ENCODE measurements at regions of chr3 and their contacts with region 1.

Region 1: GRCh38 chr3:129249276-129250065 is at the start of gene COPG1:
- DNase-seq: peak; percentile 89
- ATAC-seq: peak; percentile 86
- H3K4me3 Mint-ChIP-seq: peak within 1 kb of the TSS; percentile 95
- H3K27ac Mint-ChIP-seq: peak within 1 kb of the TSS; percentile 96
- H3K4me1 Mint-ChIP-seq: peaks cover 38% of the 10 kb centered on the region
- H3K27me3 Mint-ChIP-seq: no peaks in the 10 kb centered on the region
- CTCF ChIP-seq: no peak
- total RNA-seq, gene COPG1: 114 to 118 TPM

Region 2: GRCh38 chr3:129045675-129046036 is 203.8 kb before region 1 on chr3:
- CTCF ChIA-PET with region 1: interaction called, 53 read pairs
- POLR2A ChIA-PET with region 1: no interaction called
- intact Hi-C with region 1: no loop called
- DNase-seq: peak; percentile 56
- ATAC-seq: peak; percentile 90
- H3K4me3 Mint-ChIP-seq: peak overlapping the region; percentile 34
- H3K27ac Mint-ChIP-seq: no peak overlapping the region
- H3K4me1 Mint-ChIP-seq: peaks cover 2% of the 10 kb centered on the region
- H3K27me3 Mint-ChIP-seq: peaks cover 6% of the 10 kb centered on the region
- CTCF ChIP-seq: no peak

Region 3: DNA sequence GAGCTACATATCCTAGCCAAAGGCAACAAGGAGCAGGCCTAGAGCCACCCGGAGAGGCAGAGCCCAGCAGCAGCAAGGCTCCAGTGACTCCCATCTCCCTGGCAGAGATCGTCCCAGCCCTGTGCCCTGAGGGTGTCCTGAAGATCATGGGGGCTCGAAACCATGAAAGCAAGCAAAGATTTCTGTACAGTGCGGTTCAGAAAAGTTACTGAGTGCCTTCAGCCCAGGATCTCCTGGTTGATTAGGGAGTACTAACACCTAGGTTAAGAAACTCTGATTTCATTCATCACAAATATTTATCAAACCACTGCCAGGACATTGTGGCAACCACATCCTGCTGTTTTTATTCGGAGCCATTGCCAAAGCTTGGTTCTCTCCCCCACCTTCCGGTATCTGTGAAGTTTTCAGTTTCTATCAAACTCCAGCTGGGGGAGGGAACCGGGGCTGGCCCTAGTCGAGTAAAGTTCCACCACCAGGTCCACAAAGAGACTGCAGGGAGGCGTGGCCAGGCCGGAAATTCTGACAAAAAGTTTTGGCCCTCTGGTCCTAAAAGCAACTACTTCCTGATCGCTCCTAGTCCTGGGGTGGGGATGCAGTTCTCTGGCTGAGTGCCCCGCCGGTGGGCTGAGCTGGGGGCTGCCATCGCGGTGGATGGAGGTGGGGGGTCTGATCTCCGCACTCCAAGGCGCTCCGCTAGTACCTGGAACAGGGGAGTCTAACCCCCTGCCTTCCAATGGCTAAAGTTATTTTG is 129.0 kb before region 1 on chr3:
- CTCF ChIA-PET with region 1: interaction called, 7 read pairs
- POLR2A ChIA-PET with region 1: interaction called, 6 read pairs
- intact Hi-C with region 1: loop called (anchors 5 kb)
- DNase-seq: peak; percentile 98
- ATAC-seq: peak; percentile 63
- H3K4me3 Mint-ChIP-seq: peak overlapping the region; percentile 88
- H3K27ac Mint-ChIP-seq: peak overlapping the region; percentile 90
- H3K4me1 Mint-ChIP-seq: peaks cover 45% of the 10 kb centered on the region
- H3K27me3 Mint-ChIP-seq: no peaks in the 10 kb centered on the region
- CTCF ChIP-seq: no peak

Region 4: DNA sequence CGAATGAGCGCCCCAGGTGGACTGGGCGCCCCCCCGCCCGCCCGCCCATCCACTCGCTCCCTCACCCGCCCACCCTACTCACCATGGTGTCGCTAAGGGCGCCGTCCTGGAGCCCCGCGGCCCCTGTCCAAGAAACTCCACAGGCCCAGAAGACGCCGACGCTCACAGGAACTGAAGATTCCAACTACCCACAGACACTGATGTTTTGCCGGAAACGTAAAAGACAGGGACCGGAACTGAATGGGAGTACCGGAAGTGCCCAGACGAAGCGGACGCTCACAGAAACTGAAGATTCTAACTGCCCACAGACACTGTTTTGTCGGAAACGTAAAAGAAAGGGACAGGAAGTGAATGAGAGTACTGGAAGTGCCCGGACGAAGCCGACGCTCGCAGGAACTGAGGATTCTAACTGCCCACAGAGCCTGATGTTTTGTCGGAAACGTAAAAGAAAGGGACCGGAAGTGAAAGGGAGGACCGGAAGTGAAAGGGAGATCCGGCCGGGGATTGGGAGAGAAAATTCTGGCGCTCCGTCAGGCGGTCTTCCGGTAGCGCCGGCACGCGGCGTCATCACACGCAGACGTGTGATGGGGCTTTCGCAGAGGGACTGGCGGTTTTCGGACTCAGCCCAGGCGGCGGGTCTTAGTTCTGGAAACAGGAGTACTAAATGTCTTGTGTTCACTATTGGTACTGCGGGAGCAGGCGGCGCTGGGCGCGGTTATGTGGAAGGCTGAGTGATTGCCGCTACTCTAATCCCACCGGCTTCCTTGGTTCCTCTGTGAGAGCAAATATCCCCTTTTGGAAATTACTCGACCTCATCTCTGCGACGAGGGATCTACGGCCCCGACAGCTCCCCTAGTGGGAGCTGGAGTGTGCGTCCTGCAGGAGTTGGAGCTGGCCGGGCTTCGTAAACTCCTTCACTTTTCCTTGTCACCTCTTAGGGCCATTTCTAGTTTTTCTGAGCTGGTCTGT is 88.3 kb before region 1 on chr3 and contains the start of gene ISY1:
- CTCF ChIA-PET with region 1: interaction called, 41 read pairs
- POLR2A ChIA-PET with region 1: interaction called, 9 read pairs
- intact Hi-C with region 1: no loop called
- DNase-seq: peak; percentile 91
- ATAC-seq: peak; percentile 82
- H3K4me3 Mint-ChIP-seq: peak within 1 kb of the TSS; percentile 88
- H3K27ac Mint-ChIP-seq: peak within 1 kb of the TSS; percentile 98
- H3K4me1 Mint-ChIP-seq: peaks cover 27% of the 10 kb centered on the region
- H3K27me3 Mint-ChIP-seq: no peaks in the 10 kb centered on the region
- CTCF ChIP-seq: peak; percentile 84
- total RNA-seq, gene ISY1: 66.7 to 68.5 TPM

Region 5: DNA sequence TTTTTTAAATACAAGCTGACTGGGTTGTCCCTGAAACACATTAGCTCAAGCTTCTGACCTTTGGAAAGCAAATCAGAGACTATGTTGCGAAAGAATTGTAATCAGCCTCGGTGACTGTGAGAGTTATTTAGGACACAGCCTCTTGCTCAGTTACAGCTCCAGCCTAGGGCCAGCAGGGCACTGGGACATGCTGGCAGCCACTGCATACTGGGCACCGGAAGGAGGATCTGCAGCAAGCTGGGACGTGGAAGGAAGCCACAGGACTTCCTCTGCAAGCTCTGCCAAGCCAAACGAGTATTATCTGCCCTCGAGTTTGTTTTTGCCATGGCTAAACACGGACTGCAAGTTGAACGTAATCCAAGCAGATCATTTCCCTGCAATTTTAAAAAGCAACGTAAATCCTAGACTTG is 24.5 kb before region 1 on chr3:
- CTCF ChIA-PET with region 1: interaction called, 32 read pairs
- POLR2A ChIA-PET with region 1: interaction called, 3 read pairs
- intact Hi-C with region 1: no loop called
- DNase-seq: peak; percentile 36
- ATAC-seq: peak; percentile 79
- H3K4me3 Mint-ChIP-seq: peak overlapping the region; percentile 30
- H3K27ac Mint-ChIP-seq: peak overlapping the region; percentile 80
- H3K4me1 Mint-ChIP-seq: peaks cover 8% of the 10 kb centered on the region
- H3K27me3 Mint-ChIP-seq: no peaks in the 10 kb centered on the region
- CTCF ChIP-seq: no peak

Region 6: GRCh38 chr3:129718201-129718600 is 468.7 kb after region 1 on chr3:
- CTCF ChIA-PET with region 1: no interaction called
- POLR2A ChIA-PET with region 1: no interaction called
- intact Hi-C with region 1: no loop called
- DNase-seq: no peak
- ATAC-seq: no peak
- H3K4me3 Mint-ChIP-seq: no peak overlapping the region
- H3K27ac Mint-ChIP-seq: no peak overlapping the region
- H3K4me1 Mint-ChIP-seq: peaks cover 4% of the 10 kb centered on the region
- H3K27me3 Mint-ChIP-seq: no peaks in the 10 kb centered on the region
- CTCF ChIP-seq: no peak